PC-9 (cell line): ENCODE measurements at regions of chr15 and their contacts with region 1.

Region 1: GRCh38 chr15:89243691-89244471 is at the start of gene FANCI:
- DNase-seq: peak; percentile 82 to 94
- H3K4me3 ChIP-seq: peak within 1 kb of the TSS; percentile 89
- H3K27ac ChIP-seq: no peak within 1 kb of the TSS
- H3K4me1 ChIP-seq: peaks cover 16% of the 10 kb centered on the region
- H3K27me3 ChIP-seq: no peaks in the 10 kb centered on the region
- CTCF ChIP-seq: peak; percentile 52; the same call in 1 of the 2 replicates
- total RNA-seq, gene FANCI: 102 and 126 TPM in 2 replicates

Region 2: GRCh38 chr15:88904624-88905327 is 339.1 kb before region 1 on chr15:
- CTCF ChIA-PET with region 1: no interaction called
- POLR2A ChIA-PET with region 1: no interaction called
- intact Hi-C with region 1: loop called (anchors 2 kb)
- DNase-seq: peak; percentile 36 to 75
- H3K4me3 ChIP-seq: no peak overlapping the region
- H3K27ac ChIP-seq: no peak overlapping the region
- H3K4me1 ChIP-seq: 0 out of 2 replicates have a peak, but pooled peaks cover 3% of the 10 kb centered on the region
- H3K27me3 ChIP-seq: no peaks in the 10 kb centered on the region
- CTCF ChIP-seq: peak; percentile 95

Region 3: GRCh38 chr15:89068325-89068784 is 175.5 kb before region 1 on chr15:
- CTCF ChIA-PET with region 1: no interaction called
- POLR2A ChIA-PET with region 1: interaction called, 19 read pairs
- intact Hi-C with region 1: no loop called
- DNase-seq: no peak
- H3K4me3 ChIP-seq: no peak overlapping the region
- H3K27ac ChIP-seq: no peak overlapping the region
- H3K4me1 ChIP-seq: no peaks in the 10 kb centered on the region
- H3K27me3 ChIP-seq: no peaks in the 10 kb centered on the region
- CTCF ChIP-seq: no peak

Region 4: GRCh38 chr15:89143503-89144162 is 100.2 kb before region 1 on chr15:
- CTCF ChIA-PET with region 1: no interaction called
- POLR2A ChIA-PET with region 1: no interaction called
- intact Hi-C with region 1: no loop called
- DNase-seq: peak; percentile 21 to 75
- H3K4me3 ChIP-seq: no peak overlapping the region
- H3K27ac ChIP-seq: peak overlapping the region; percentile 21
- H3K4me1 ChIP-seq: peaks cover 23% of the 10 kb centered on the region
- H3K27me3 ChIP-seq: no peaks in the 10 kb centered on the region
- CTCF ChIP-seq: no peak

Region 5: DNA sequence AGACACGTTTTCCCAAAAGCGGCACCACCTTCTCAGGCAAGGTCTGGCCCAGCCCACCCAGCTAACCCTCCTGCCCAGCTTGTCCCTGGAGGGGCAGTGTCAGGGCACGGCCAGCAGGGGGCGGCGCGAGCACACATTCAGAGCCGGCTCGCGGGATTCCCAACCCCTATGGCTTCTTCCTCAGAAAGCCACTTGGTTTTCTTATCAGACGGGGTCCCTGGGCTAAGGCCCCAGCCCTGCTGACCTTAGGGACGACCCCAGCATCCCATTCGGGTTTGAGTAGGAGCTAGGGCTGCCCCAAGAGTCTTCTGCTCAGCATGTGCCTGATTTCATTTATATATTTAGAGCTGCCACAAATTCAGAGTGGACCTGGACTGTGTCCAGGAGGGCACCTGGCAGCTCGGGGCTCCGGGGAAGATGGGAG is 37.0 kb before region 1 on chr15:
- CTCF ChIA-PET with region 1: interaction called, 9 read pairs
- POLR2A ChIA-PET with region 1: no interaction called
- intact Hi-C with region 1: loop called (anchors 5 kb)
- DNase-seq: peak; percentile 55 to 74
- H3K4me3 ChIP-seq: no peak overlapping the region
- H3K27ac ChIP-seq: no peak overlapping the region
- H3K4me1 ChIP-seq: no peaks in the 10 kb centered on the region
- H3K27me3 ChIP-seq: no peaks in the 10 kb centered on the region
- CTCF ChIP-seq: peak; percentile 96

Region 6: DNA sequence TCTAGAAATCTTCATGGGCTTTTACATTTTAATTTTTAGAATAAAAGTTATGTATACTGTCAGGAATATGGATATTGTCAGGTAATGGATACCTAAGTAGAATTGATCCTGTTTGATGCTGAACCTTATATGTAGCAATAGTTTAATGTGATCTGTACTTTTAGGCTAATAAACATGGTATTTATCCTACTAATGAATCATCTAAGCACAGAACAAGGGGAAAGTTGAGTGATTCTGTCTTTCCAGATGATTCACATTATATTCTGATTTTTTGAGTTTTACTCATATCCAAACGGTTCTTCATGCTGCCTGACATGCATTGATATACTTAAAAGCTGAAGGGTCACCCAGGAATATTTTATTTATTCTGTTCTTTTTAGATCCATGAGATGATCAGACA is 34.4 kb after region 1 on chr15:
- CTCF ChIA-PET with region 1: no interaction called
- POLR2A ChIA-PET with region 1: no interaction called
- intact Hi-C with region 1: no loop called
- DNase-seq: no peak
- H3K4me3 ChIP-seq: no peak overlapping the region
- H3K27ac ChIP-seq: no peak overlapping the region
- H3K4me1 ChIP-seq: no peaks in the 10 kb centered on the region
- H3K27me3 ChIP-seq: no peaks in the 10 kb centered on the region
- CTCF ChIP-seq: no peak